Panc1 (cell line): ENCODE measurements at regions of chrX and their contacts with region 1.

Region 1: GRCh38 chrX:17559728-17560379 is 177.4 kb upstream of the SCML1 start:
- DNase-seq: no peak
- ATAC-seq: no peak
- H3K4me3 ChIP-seq: no peak overlapping the region
- H3K27ac ChIP-seq: no peak overlapping the region
- H3K4me1 ChIP-seq: no peaks in the 10 kb centered on the region
- H3K27me3 ChIP-seq: no peaks in the 10 kb centered on the region
- CTCF ChIP-seq: no peak

Region 2: DNA sequence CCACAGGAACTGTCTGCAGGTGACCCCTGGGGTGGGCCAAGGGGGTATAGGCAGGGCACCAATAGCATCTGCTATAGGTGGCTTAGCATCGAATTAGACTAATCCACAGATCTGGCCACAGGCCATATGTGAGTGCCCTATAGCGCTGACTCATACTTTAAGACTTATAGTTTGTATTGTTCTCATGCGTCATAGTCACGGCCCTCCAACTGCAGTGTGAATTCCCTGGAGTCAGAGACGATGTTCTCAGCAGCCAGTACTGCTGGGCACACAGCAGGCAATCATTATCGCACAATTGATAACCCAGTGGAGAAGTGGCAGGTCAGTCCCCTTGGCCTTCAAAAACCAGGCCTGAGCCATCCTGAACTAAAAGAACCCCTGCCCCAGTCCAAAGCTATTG is 1504.3 kb after region 1 on chrX:
- CTCF ChIA-PET with region 1: no interaction called
- POLR2A ChIA-PET with region 1: interaction called, 12 read pairs
- in situ Hi-C with region 1: no loop called
- intact Hi-C with region 1: no loop called
- DNase-seq: no peak
- ATAC-seq: peak; percentile 58
- H3K4me3 ChIP-seq: no peak overlapping the region
- H3K27ac ChIP-seq: no peak overlapping the region
- H3K4me1 ChIP-seq: no peaks in the 10 kb centered on the region
- H3K27me3 ChIP-seq: no peaks in the 10 kb centered on the region
- CTCF ChIP-seq: no peak